A549 (cell line): ENCODE measurements at regions of chr14 and their contacts with region 1.

Region 1: GRCh38 chr14:77151918-77152588 is 10.5 kb upstream of the ZDHHC22 start:
- DNase-seq: peak; percentile 42 to 83
- ATAC-seq: peak; percentile 84 to 91; a peak in 5 of 6 replicates
- H3K4me3 ChIP-seq: no peak overlapping the region
- H3K27ac ChIP-seq: no peak overlapping the region
- H3K4me1 ChIP-seq: no peaks in the 10 kb centered on the region
- CTCF ChIP-seq: peak; percentile 68
- EP300 ChIP-seq: no peak
- POLR2A ChIP-seq: no peak
- RAD21 ChIP-seq: peak; percentile 74 to 75

Region 2: GRCh38 chr14:77133720-77134338 is 18.2 kb before region 1 on chr14:
- CTCF ChIA-PET with region 1: interaction called, 78 read pairs
- POLR2A ChIA-PET with region 1: no interaction called
- DNase-seq: peak; percentile 49 to 65
- ATAC-seq: peak; percentile 55 to 78; a peak in 5 of 6 replicates
- H3K4me3 ChIP-seq: no peak overlapping the region
- H3K27ac ChIP-seq: no peak overlapping the region
- H3K4me1 ChIP-seq: no peaks in the 10 kb centered on the region
- CTCF ChIP-seq: no peak
- EP300 ChIP-seq: no peak
- POLR2A ChIP-seq: no peak
- RAD21 ChIP-seq: no peak

Region 3: GRCh38 chr14:77170045-77170444 is 18.0 kb after region 1 on chr14:
- CTCF ChIA-PET with region 1: interaction called, 12 read pairs
- POLR2A ChIA-PET with region 1: no interaction called
- DNase-seq: no peak
- ATAC-seq: no peak
- H3K4me3 ChIP-seq: no peak overlapping the region
- H3K27ac ChIP-seq: no peak overlapping the region
- H3K4me1 ChIP-seq: no peaks in the 10 kb centered on the region
- CTCF ChIP-seq: no peak
- EP300 ChIP-seq: no peak
- POLR2A ChIP-seq: no peak
- RAD21 ChIP-seq: no peak

Region 4: DNA sequence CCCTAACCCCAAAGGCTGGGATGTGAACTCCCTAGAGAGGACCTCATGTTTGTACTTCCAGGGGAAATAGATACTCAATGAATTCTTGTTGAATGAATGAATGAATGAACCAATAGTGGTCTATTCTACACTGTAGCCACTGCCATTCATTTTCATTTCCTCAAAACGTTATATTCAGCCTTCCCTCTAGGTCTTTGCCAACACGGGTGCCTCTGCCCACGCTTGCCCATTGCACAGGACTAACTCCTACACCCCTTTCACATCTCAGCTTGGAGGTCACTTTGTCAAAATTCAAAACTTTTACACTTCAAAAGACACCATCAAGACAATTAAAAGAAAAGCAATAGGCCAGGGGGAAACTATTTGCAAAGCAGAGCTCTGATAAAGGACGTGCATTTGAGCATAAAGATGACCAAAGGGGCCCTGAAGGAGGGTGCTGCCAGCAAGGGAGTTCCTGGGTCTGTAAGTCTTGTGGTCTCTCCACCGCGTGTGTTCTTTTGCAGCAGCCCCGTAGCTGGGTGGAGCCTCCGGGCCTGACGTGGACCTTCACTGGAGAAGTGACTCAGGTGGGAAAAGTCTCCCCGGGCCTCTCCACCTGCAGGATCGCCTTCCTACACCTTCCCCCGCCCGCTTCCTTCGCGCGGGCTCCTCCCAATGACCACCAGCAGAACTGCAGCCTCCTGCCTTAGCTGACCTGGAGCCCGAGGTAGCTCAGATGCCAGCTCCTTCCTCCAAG is 61.1 kb after region 1 on chr14:
- CTCF ChIA-PET with region 1: interaction called, 45 read pairs
- POLR2A ChIA-PET with region 1: no interaction called
- DNase-seq: peak; percentile 45 to 72
- ATAC-seq: peak; percentile 88 to 96
- H3K4me3 ChIP-seq: no peak overlapping the region
- H3K27ac ChIP-seq: no peak overlapping the region
- H3K4me1 ChIP-seq: no peaks in the 10 kb centered on the region
- CTCF ChIP-seq: peak; percentile 47
- EP300 ChIP-seq: no peak
- POLR2A ChIP-seq: no peak
- RAD21 ChIP-seq: peak; percentile 58 to 68

Region 5: DNA sequence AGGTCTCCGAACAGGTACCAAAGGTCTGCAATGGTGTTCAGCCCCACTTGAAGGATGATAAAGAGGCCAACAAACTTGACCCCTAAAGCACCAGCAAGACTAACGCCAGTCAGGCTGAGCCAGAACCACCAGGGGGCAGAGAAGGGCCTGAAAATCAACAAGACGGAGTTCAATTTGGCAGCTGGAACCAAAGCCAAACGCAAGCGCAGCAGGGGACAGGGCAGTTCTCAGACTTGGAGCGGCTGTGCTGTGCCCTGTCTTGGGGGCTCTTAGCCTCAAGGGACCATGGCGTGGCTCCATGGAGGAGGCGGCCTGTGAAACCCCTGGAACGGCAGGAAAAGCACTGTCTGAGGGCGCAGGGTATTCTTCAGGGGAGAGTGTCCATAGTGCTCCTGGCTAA is 149.1 kb after region 1 on chr14:
- CTCF ChIA-PET with region 1: interaction called, 69 read pairs
- POLR2A ChIA-PET with region 1: interaction called, 3 read pairs
- DNase-seq: peak; percentile 78 to 89
- ATAC-seq: peak; percentile 60 to 79
- H3K4me3 ChIP-seq: no peak overlapping the region
- H3K27ac ChIP-seq: peak overlapping the region; percentile 95 to 96
- H3K4me1 ChIP-seq: peaks cover 51% of the 10 kb centered on the region
- CTCF ChIP-seq: peak; percentile 95
- EP300 ChIP-seq: no peak
- POLR2A ChIP-seq: no peak
- RAD21 ChIP-seq: peak; percentile 96 to 97

Region 6: GRCh38 chr14:77409131-77409533 is 257.1 kb after region 1 on chr14:
- CTCF ChIA-PET with region 1: interaction called, 10 read pairs
- POLR2A ChIA-PET with region 1: no interaction called
- DNase-seq: peak in 1 of 2 experiments; percentile 64
- ATAC-seq: peak; percentile 71 to 93; a peak in 5 of 6 replicates
- H3K4me3 ChIP-seq: no peak overlapping the region
- H3K27ac ChIP-seq: no peak overlapping the region
- H3K4me1 ChIP-seq: no peaks in the 10 kb centered on the region
- CTCF ChIP-seq: peak; percentile 45
- EP300 ChIP-seq: no peak
- POLR2A ChIP-seq: no peak
- RAD21 ChIP-seq: peak in 1 of 2 experiments; percentile 27; a peak in 2 of 5 replicates